Caco-2 (cell line): ENCODE measurements at regions of chr3 and their contacts with region 1.

Region 1: GRCh38 chr3:87206074-87207034 is 20.8 kb upstream of the CHMP2B start:
- DNase-seq: peak in 1 of 2 experiments; percentile 46
- H3K4me3 ChIP-seq: no peak overlapping the region
- H3K4me3 Mint-ChIP-seq: peak overlapping the region; percentile 13
- H3K27ac Mint-ChIP-seq: no peak overlapping the region
- H3K4me1 ChIP-seq: peaks cover 20% of the 10 kb centered on the region
- H3K4me1 Mint-ChIP-seq: no peaks in the 10 kb centered on the region
- H3K27me3 ChIP-seq: no peaks in the 10 kb centered on the region
- H3K27me3 Mint-ChIP-seq: no peaks in the 10 kb centered on the region
- CTCF ChIP-seq: no peak

Region 2: DNA sequence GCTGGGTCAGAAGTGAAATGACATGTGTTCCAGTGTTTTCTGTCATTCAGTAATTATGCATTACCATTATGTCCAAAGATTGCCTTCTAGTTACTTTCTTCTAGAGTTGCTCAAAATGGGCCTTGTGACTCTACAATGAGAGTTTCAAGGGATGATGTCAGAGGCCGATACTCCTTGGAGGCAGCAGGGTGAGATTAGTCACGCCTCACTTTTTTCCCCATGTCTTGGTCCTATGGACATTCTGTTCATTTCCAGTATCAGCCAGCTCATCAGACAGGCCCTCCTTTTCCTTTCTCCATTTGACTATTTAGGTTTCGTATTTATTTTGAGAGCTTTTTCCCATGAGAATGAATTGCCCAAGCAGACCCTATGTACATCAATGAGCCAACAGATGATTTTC is 232.9 kb before region 1 on chr3:
- CTCF ChIA-PET with region 1: no interaction called
- POLR2A ChIA-PET with region 1: no interaction called
- intact Hi-C with region 1: no loop called
- DNase-seq: no peak
- H3K4me3 ChIP-seq: no peak overlapping the region
- H3K4me3 Mint-ChIP-seq: no peak overlapping the region
- H3K27ac Mint-ChIP-seq: no peak overlapping the region
- H3K4me1 ChIP-seq: peaks cover 9% of the 10 kb centered on the region
- H3K4me1 Mint-ChIP-seq: peaks cover 6% of the 10 kb centered on the region
- H3K27me3 ChIP-seq: no peaks in the 10 kb centered on the region
- H3K27me3 Mint-ChIP-seq: no peaks in the 10 kb centered on the region
- CTCF ChIP-seq: no peak

Region 3: GRCh38 chr3:87186618-87187159 is 19.7 kb before region 1 on chr3:
- CTCF ChIA-PET with region 1: no interaction called
- POLR2A ChIA-PET with region 1: no interaction called
- intact Hi-C with region 1: no loop called
- DNase-seq: no peak
- H3K4me3 ChIP-seq: no peak overlapping the region
- H3K4me3 Mint-ChIP-seq: no peak overlapping the region
- H3K27ac Mint-ChIP-seq: no peak overlapping the region
- H3K4me1 ChIP-seq: no peaks in the 10 kb centered on the region; the same call in 1 of the 2 replicates
- H3K4me1 Mint-ChIP-seq: peaks cover 8% of the 10 kb centered on the region
- H3K27me3 ChIP-seq: no peaks in the 10 kb centered on the region
- H3K27me3 Mint-ChIP-seq: no peaks in the 10 kb centered on the region
- CTCF ChIP-seq: no peak

Region 4: GRCh38 chr3:87227104-87227834 is 20.9 kb after region 1 on chr3 and contains the start of gene CHMP2B:
- CTCF ChIA-PET with region 1: no interaction called
- POLR2A ChIA-PET with region 1: no interaction called
- intact Hi-C with region 1: loop called (anchors 1 kb)
- DNase-seq: peak; percentile 90 to 91
- H3K4me3 ChIP-seq: peak within 1 kb of the TSS; percentile 80
- H3K4me3 Mint-ChIP-seq: peak within 1 kb of the TSS; percentile 87
- H3K27ac Mint-ChIP-seq: peak within 1 kb of the TSS; percentile 94
- H3K4me1 ChIP-seq: peaks cover 9% of the 10 kb centered on the region; the same call in 1 of the 2 replicates
- H3K4me1 Mint-ChIP-seq: peaks cover 19% of the 10 kb centered on the region
- H3K27me3 ChIP-seq: no peaks in the 10 kb centered on the region
- H3K27me3 Mint-ChIP-seq: no peaks in the 10 kb centered on the region
- CTCF ChIP-seq: no peak
- total RNA-seq, gene CHMP2B: 45.4 and 52.4 TPM in 2 replicates